ENCODE measurements at regions of chr6 and their contacts with region 1.

Region 1: GRCh38 chr6:44265007-44265721 is at the start of gene NFKBIE:
- DNase-seq: peak; percentile 87 to 97 (median 94)
- ATAC-seq: peak; percentile 79
- H3K4me3 ChIP-seq: peak within 1 kb of the TSS; percentile 99
- H3K4me3 Mint-ChIP-seq: peak within 1 kb of the TSS; percentile 97
- H3K27ac ChIP-seq: peak within 1 kb of the TSS; percentile 93
- H3K27ac Mint-ChIP-seq: peak within 1 kb of the TSS; percentile 84
- H3K4me1 ChIP-seq: peaks cover 51% of the 10 kb centered on the region
- H3K4me1 Mint-ChIP-seq: peaks cover 62% of the 10 kb centered on the region
- H3K27me3 ChIP-seq: peaks cover 16 to 21% of the 10 kb centered on the region in 2 experiments
- H3K27me3 Mint-ChIP-seq: peaks cover 22% of the 10 kb centered on the region
- CTCF ChIP-seq: peak; percentile 67
- total RNA-seq, gene NFKBIE: 43.0 to 43.1 TPM

Region 2: DNA sequence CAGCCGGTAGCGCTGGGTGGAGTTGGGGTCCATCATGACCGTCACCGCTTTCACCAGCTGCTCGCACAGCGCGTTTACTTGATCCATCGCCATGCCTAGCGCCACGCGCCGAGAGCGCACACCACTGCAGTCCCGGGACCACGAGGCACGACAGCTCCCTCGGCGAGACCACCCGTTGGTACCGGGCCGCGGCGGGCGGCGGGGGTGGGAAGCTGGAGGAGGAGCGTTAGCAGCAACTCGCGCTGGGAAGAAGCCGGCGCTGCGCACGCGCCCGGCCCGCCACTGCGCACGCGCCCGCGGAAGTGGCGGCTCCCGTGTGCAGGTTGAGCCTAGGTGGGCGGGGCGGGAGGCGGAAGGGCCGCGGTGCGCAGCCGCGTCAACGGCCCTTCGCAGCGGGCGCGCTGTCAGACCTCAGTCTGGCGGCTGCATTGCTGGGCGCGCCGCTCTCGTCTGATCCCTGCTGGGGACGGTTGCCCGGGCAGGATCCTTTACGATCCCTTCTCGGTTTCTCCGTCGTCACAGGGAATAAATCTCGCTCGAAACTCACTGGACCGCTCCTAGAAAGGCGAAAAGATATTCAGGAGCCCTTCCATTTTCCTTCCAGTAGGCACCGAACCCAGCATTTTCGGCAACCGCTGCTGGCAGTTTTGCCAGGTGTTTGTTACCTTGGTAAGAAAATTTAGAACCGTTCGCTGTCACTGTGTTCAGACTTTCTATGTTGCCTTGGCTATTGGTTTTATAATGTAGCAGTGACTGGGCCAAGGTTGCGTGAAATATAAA is 689.2 kb before region 1 on chr6 and contains the starts of genes POLH and XPO5:
- CTCF ChIA-PET with region 1: no interaction called
- POLR2A ChIA-PET with region 1: no interaction called
- intact Hi-C with region 1: loop called in 1 of 2 experiments (anchors 10 kb)
- DNase-seq: peak; percentile 75 to 97 (median 89)
- ATAC-seq: peak; percentile 95
- H3K4me3 ChIP-seq: peak within 1 kb of the TSS; percentile 100
- H3K4me3 Mint-ChIP-seq: peak within 1 kb of the TSS; percentile 92
- H3K27ac ChIP-seq: peak within 1 kb of the TSS; percentile 58 to 75
- H3K27ac Mint-ChIP-seq: peak within 1 kb of the TSS; percentile 90
- H3K4me1 ChIP-seq: peaks cover 25% of the 10 kb centered on the region
- H3K4me1 Mint-ChIP-seq: peaks cover 31% of the 10 kb centered on the region
- H3K27me3 ChIP-seq: no peaks in the 10 kb centered on the region
- H3K27me3 Mint-ChIP-seq: no peaks in the 10 kb centered on the region
- CTCF ChIP-seq: no peak
- total RNA-seq, gene POLH: 4.2 to 4.4 TPM
- total RNA-seq, gene XPO5: 26.8 to 31.2 TPM

Region 3: DNA sequence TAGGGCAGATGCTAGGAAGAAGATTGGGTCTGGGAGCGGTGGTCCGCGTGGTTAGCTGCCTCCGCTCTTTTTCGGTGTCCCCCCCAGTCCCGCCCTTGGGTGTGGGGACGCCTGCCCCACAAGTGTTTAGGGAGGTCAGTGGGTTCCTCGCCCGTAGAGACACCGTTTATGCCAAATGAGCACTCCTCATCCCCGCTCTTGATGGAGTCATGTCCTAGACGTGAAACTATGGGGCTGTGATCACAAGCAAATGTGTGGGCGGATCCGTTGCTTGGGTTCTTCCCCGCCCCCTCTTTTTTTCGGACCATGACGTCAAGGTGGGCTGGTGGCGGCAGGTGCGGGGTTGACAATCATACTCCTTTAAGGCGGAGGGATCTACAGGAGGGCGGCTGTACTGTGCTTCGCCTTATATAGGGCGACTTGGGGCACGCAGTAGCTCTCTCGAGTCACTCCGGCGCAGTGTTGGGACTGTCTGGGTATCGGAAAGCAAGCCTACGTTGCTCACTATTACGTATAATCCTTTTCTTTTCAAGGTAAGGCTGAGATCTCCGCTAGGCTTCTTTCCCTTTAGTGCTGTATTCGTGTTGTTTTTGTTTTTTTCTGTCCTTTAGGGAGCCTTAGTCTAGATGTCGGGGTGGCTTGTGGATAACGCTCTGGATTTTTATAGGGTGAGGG is 18.4 kb before region 1 on chr6 and contains the start of gene HSP90AB1:
- CTCF ChIA-PET with region 1: interaction called, 9 read pairs
- POLR2A ChIA-PET with region 1: interaction called, 35 read pairs
- intact Hi-C with region 1: loop called (anchors 1 to 2 kb)
- DNase-seq: peak; percentile 91 to 99 (median 94)
- ATAC-seq: peak; percentile 83
- H3K4me3 ChIP-seq: peak within 1 kb of the TSS; percentile 70
- H3K4me3 Mint-ChIP-seq: peak within 1 kb of the TSS; percentile 96
- H3K27ac ChIP-seq: peak within 1 kb of the TSS; percentile 92 to 98
- H3K27ac Mint-ChIP-seq: peak within 1 kb of the TSS; percentile 93
- H3K4me1 ChIP-seq: peaks cover 37% of the 10 kb centered on the region
- H3K4me1 Mint-ChIP-seq: peaks cover 47% of the 10 kb centered on the region
- H3K27me3 ChIP-seq: no peaks in the 10 kb centered on the region
- H3K27me3 Mint-ChIP-seq: peaks cover 5% of the 10 kb centered on the region
- CTCF ChIP-seq: no peak
- total RNA-seq, gene HSP90AB1: 401 to 405 TPM

Region 4: GRCh38 chr6:44312901-44313788 is 48.0 kb after region 1 on chr6 and contains the start of gene AARS2:
- CTCF ChIA-PET with region 1: interaction called, 25 read pairs
- POLR2A ChIA-PET with region 1: interaction called, 6 read pairs
- intact Hi-C with region 1: loop called in 1 of 2 experiments (anchors 2 kb)
- DNase-seq: peak; percentile 84 to 97 (median 92)
- ATAC-seq: peak; percentile 90
- H3K4me3 ChIP-seq: peak within 1 kb of the TSS; percentile 87
- H3K4me3 Mint-ChIP-seq: peak within 1 kb of the TSS; percentile 97
- H3K27ac ChIP-seq: peak within 1 kb of the TSS; percentile 80 to 83
- H3K27ac Mint-ChIP-seq: peak within 1 kb of the TSS; percentile 91
- H3K4me1 ChIP-seq: peaks cover 13% of the 10 kb centered on the region
- H3K4me1 Mint-ChIP-seq: peaks cover 28% of the 10 kb centered on the region
- H3K27me3 ChIP-seq: no peaks in the 10 kb centered on the region
- H3K27me3 Mint-ChIP-seq: no peaks in the 10 kb centered on the region
- CTCF ChIP-seq: peak; percentile 97
- total RNA-seq, gene AARS2: 12.0 to 12.7 TPM

Region 5: DNA sequence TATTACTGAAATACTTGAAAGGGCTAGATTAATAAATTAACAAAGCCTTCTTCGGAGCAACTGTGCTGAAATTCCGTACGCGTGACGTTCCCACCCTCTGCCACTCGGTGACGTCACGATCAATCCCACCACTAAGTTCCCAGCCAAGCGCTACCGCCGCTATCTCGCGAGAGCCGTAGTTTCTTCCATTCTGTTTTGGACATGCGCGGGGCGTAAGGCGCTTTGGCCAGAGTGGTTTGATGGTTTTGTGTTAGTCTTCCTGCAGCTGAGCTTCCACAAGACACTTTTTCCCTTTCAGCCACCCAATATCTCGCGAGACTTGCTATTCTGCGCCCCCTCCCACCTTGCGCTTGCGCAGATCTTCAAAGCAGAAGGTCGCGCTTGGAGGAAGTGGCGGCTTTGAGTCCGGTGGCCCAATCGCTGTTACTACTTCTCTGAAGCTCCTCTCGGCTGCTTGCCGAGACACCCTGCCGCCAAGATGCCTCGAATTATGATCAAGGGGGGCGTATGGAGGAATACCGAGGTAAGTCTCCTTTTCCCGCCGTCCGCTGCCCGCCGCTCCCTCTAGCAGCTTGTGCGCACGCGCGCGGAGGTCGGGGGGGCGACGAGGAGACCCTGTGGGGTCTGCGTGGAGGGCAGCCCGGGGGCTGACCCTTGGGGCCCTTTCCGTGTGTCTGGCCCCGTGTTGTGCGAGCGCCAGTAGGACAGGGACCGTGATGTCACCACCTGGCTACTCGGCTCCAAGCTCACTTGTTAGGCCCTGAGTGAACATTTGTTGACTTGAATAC is 122.4 kb after region 1 on chr6 and contains the start of gene CDC5L:
- CTCF ChIA-PET with region 1: no interaction called
- POLR2A ChIA-PET with region 1: interaction called, 3 read pairs
- intact Hi-C with region 1: loop called in 1 of 2 experiments (anchors 5 kb)
- DNase-seq: peak; percentile 74 to 98 (median 86)
- ATAC-seq: peak; percentile 81
- H3K4me3 ChIP-seq: peak within 1 kb of the TSS; percentile 84
- H3K4me3 Mint-ChIP-seq: peak within 1 kb of the TSS; percentile 97
- H3K27ac ChIP-seq: peak within 1 kb of the TSS; percentile 89 to 93
- H3K27ac Mint-ChIP-seq: peak within 1 kb of the TSS; percentile 93
- H3K4me1 ChIP-seq: peaks cover 19% of the 10 kb centered on the region
- H3K4me1 Mint-ChIP-seq: peaks cover 40% of the 10 kb centered on the region
- H3K27me3 ChIP-seq: no peaks in the 10 kb centered on the region
- H3K27me3 Mint-ChIP-seq: no peaks in the 10 kb centered on the region
- CTCF ChIP-seq: no peak
- total RNA-seq, gene CDC5L: 18.9 to 19.9 TPM

Region 6: GRCh38 chr6:45377554-45378333 is 1112.6 kb after region 1 on chr6 and contains the start of gene SUPT3H:
- CTCF ChIA-PET with region 1: no interaction called
- POLR2A ChIA-PET with region 1: no interaction called
- intact Hi-C with region 1: loop called in 1 of 2 experiments (anchors 5 kb)
- DNase-seq: peak; percentile 74 to 98 (median 86)
- ATAC-seq: peak; percentile 80
- H3K4me3 ChIP-seq: peak within 1 kb of the TSS; percentile 85
- H3K4me3 Mint-ChIP-seq: peak within 1 kb of the TSS; percentile 100
- H3K27ac ChIP-seq: peak within 1 kb of the TSS; percentile 91 to 93
- H3K27ac Mint-ChIP-seq: peak within 1 kb of the TSS; percentile 99
- H3K4me1 ChIP-seq: peaks cover 8% of the 10 kb centered on the region
- H3K4me1 Mint-ChIP-seq: peaks cover 31% of the 10 kb centered on the region
- H3K27me3 ChIP-seq: no peaks in the 10 kb centered on the region
- H3K27me3 Mint-ChIP-seq: no peaks in the 10 kb centered on the region
- CTCF ChIP-seq: no peak
- total RNA-seq, gene SUPT3H: 8.9 to 10.5 TPM

Measured in CD4-positive, alpha-beta T cell (primary cell).